ENCODE measurements at regions of chr3 and their contacts with region 1.

Region 1: GRCh38 chr3:49839193-49839809 is 17.1 kb downstream of the TRAIP start:
- DNase-seq: peak; percentile 81
- H3K4me3 Mint-ChIP-seq: no peak overlapping the region
- H3K27ac Mint-ChIP-seq: no peak overlapping the region
- H3K4me1 Mint-ChIP-seq: peaks cover 1% of the 10 kb centered on the region
- H3K27me3 Mint-ChIP-seq: no peaks in the 10 kb centered on the region

Region 2: DNA sequence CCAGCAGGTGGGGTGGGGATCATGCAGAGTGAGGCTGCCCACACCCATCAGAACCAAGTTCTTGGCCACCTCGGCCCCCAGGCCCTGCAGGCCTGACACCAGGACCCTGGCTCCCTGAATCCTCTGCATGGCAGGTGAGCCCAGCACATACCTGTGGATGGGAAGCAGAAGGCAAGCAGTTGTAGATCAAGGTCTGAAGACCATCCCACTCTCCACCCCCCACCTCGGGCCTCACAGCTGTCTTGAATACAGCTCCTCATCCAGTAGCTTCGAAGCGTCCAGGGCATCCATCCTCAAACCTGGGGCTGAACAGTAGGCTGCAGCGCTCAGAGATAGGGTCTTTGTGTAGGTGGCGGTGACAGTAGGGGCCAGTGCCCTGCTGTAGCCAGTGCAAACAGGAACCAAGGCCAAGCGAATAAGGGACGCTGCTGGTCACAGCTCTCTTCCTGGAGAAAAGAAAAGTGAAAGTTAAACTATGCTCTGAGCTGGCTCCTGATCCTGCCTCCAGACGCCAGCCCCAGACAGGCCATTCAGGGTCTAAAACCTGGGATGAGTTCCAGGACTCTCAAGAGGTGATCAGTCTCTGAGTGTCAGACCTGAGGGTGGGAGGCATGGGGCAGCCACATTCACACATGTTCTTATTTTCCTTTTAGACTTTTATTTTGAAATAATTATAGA is 25.7 kb before region 1 on chr3 and contains the start of gene UBA7:
- CTCF ChIA-PET with region 1: interaction called, 17 read pairs
- POLR2A ChIA-PET with region 1: interaction called, 3 read pairs
- DNase-seq: peak; percentile 51
- H3K4me3 Mint-ChIP-seq: peak within 1 kb of the TSS; percentile 96
- H3K27ac Mint-ChIP-seq: peak within 1 kb of the TSS; percentile 93
- H3K4me1 Mint-ChIP-seq: peaks cover 31% of the 10 kb centered on the region
- H3K27me3 Mint-ChIP-seq: no peaks in the 10 kb centered on the region
- total RNA-seq, gene UBA7: 179 to 182 TPM

Region 3: GRCh38 chr3:49826016-49826415 is 13.3 kb before region 1 on chr3:
- CTCF ChIA-PET with region 1: interaction called, 19 read pairs
- POLR2A ChIA-PET with region 1: interaction called, 3 read pairs
- DNase-seq: no peak
- H3K4me3 Mint-ChIP-seq: no peak overlapping the region
- H3K27ac Mint-ChIP-seq: no peak overlapping the region
- H3K4me1 Mint-ChIP-seq: no peaks in the 10 kb centered on the region
- H3K27me3 Mint-ChIP-seq: no peaks in the 10 kb centered on the region

Region 4: GRCh38 chr3:49856181-49857005 is 17.1 kb after region 1 on chr3 and contains the start of gene TRAIP:
- CTCF ChIA-PET with region 1: interaction called, 16 read pairs
- POLR2A ChIA-PET with region 1: no interaction called
- DNase-seq: peak; percentile 95
- H3K4me3 Mint-ChIP-seq: peak within 1 kb of the TSS; percentile 91
- H3K27ac Mint-ChIP-seq: peak within 1 kb of the TSS; percentile 76
- H3K4me1 Mint-ChIP-seq: peaks cover 19% of the 10 kb centered on the region
- H3K27me3 Mint-ChIP-seq: no peaks in the 10 kb centered on the region
- total RNA-seq, gene TRAIP: 19.3 to 21.0 TPM

Region 5: GRCh38 chr3:50405249-50405648 is 565.9 kb after region 1 on chr3:
- CTCF ChIA-PET with region 1: no interaction called
- POLR2A ChIA-PET with region 1: no interaction called
- DNase-seq: peak; percentile 49
- H3K4me3 Mint-ChIP-seq: no peak overlapping the region
- H3K27ac Mint-ChIP-seq: no peak overlapping the region
- H3K4me1 Mint-ChIP-seq: no peaks in the 10 kb centered on the region
- H3K27me3 Mint-ChIP-seq: no peaks in the 10 kb centered on the region